ENCODE measurements at regions of chr18 and their contacts with region 1.

Region 1: GRCh38 chr18:3245853-3246634 is 1.6 kb upstream of the MYL12A start:
- DNase-seq: peak; percentile 65
- ATAC-seq: peak; percentile 62
- H3K4me3 Mint-ChIP-seq: peak overlapping the region; percentile 94
- H3K27ac Mint-ChIP-seq: peak overlapping the region; percentile 99
- H3K4me1 Mint-ChIP-seq: peaks cover 44% of the 10 kb centered on the region
- H3K27me3 Mint-ChIP-seq: no peaks in the 10 kb centered on the region
- CTCF ChIP-seq: peak; percentile 54

Region 2: GRCh38 chr18:2655178-2655953 is 590.7 kb before region 1 on chr18 and contains the start of gene SMCHD1:
- CTCF ChIA-PET with region 1: no interaction called
- POLR2A ChIA-PET with region 1: interaction called, 4 read pairs
- intact Hi-C with region 1: loop called (anchors 1 kb)
- DNase-seq: peak; percentile 90
- ATAC-seq: peak; percentile 74
- H3K4me3 Mint-ChIP-seq: peak within 1 kb of the TSS; percentile 96
- H3K27ac Mint-ChIP-seq: peak within 1 kb of the TSS; percentile 98
- H3K4me1 Mint-ChIP-seq: peaks cover 44% of the 10 kb centered on the region
- H3K27me3 Mint-ChIP-seq: no peaks in the 10 kb centered on the region
- CTCF ChIP-seq: no peak
- total RNA-seq, gene SMCHD1: 111 and 144 TPM in 2 replicates

Region 3: DNA sequence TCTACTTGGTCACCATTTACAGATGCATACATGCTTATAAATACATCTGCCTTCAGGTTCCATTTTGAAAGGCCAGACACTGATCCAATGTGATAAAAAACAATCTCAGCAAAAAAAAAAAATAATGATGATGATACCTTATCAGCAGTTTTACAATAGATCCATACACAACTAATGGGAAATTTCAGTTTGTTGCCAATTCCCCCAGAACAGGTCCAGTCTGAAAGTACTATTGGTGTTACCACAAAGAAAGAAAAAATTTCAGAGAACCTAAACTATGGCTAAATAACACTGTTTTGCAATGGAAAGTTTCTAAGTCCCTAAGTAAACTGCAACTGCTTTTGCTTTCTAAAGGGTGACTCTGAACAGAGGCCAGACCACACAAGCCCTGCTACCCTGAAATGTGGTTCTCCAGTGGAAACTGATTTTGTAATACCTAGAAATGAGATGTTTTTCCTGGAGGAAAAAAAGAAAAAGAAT is 287.2 kb before region 1 on chr18:
- CTCF ChIA-PET with region 1: interaction called, 10 read pairs
- POLR2A ChIA-PET with region 1: interaction called, 55 read pairs
- intact Hi-C with region 1: no loop called
- DNase-seq: no peak
- ATAC-seq: no peak
- H3K4me3 Mint-ChIP-seq: peak overlapping the region; percentile 32
- H3K27ac Mint-ChIP-seq: peak overlapping the region; percentile 97
- H3K4me1 Mint-ChIP-seq: peaks cover 82% of the 10 kb centered on the region
- H3K27me3 Mint-ChIP-seq: no peaks in the 10 kb centered on the region
- CTCF ChIP-seq: no peak

Region 4: DNA sequence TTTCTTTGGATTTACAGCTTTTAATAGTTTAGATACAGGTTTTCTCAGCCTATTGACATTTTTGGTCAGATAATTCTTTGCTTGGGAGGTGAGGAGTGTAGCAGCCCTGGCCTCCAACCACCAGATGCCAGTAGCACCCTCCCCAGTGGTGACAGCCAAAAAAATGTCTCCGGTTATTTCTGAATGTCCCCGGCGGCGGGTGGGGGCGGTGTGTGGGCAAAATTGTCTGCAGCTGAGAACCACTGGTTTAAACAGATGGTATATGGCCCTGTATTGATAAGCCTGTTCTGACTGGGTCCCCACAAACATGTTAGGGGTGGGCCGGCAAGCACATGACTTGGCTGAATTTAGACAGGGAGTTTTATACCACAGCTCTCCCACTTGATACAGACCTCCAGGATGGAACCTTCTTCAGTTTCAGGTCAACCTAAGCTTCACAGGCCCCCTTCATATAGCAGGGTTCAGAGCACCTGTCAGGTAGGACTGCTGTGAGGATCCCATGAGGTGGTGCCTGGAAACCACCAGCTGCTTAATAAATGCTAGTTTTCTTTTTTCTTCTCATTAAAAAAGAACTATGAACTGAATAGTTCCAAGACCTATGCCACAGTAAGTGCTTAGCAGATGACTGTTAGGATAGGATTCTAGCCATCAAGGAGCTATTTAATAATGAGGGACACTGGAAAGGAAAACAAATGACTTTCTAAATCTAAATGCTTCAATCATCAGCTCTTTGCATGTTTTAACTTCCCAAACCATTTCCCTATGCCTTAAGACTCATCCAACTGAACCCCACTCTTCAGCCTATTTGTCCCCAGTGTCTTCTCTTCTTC is 251.2 kb before region 1 on chr18:
- CTCF ChIA-PET with region 1: interaction called, 119 read pairs
- POLR2A ChIA-PET with region 1: interaction called, 43 read pairs
- intact Hi-C with region 1: loop called (anchors 1 kb)
- DNase-seq: peak; percentile 47
- ATAC-seq: peak; percentile 97
- H3K4me3 Mint-ChIP-seq: peak overlapping the region; percentile 48
- H3K27ac Mint-ChIP-seq: peak overlapping the region; percentile 50
- H3K4me1 Mint-ChIP-seq: peaks cover 34% of the 10 kb centered on the region
- H3K27me3 Mint-ChIP-seq: no peaks in the 10 kb centered on the region
- CTCF ChIP-seq: no peak

Region 5: DNA sequence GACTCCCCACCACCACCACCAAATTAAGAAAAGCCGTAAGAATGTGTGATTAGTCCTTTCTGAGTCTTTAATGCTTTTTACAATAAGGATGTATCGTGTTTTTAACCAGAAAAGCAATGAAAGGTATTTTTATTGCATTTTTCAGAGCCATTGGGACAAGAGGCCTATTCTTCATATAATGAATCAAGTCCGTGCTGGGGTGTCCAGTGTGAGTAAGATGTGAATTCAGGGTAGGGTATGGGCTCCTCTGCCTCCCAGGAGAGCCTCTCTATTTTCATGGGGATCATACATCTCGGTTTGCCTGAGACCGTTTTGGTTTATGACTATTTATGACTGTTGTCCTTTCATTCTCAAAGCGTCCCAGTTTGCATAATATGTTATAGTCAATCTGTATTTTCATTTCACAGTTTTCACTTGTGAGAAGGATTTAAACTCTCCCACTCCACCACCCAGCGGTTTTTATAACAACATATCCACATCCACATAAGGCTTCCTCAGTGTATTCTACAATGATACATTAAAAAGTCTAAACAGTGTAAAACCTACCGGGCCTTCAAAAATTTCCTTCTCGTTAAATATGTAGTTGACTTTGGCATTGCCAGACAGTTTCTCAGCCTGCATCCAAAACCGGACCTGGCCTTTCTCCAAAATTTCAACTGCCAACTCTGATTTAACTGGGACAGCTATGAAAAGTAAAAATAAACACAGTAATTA is 152.3 kb before region 1 on chr18:
- CTCF ChIA-PET with region 1: no interaction called
- POLR2A ChIA-PET with region 1: no interaction called
- intact Hi-C with region 1: no loop called
- DNase-seq: no peak
- ATAC-seq: no peak
- H3K4me3 Mint-ChIP-seq: no peak overlapping the region
- H3K27ac Mint-ChIP-seq: no peak overlapping the region
- H3K4me1 Mint-ChIP-seq: no peaks in the 10 kb centered on the region
- H3K27me3 Mint-ChIP-seq: no peaks in the 10 kb centered on the region
- CTCF ChIP-seq: no peak

Region 6: DNA sequence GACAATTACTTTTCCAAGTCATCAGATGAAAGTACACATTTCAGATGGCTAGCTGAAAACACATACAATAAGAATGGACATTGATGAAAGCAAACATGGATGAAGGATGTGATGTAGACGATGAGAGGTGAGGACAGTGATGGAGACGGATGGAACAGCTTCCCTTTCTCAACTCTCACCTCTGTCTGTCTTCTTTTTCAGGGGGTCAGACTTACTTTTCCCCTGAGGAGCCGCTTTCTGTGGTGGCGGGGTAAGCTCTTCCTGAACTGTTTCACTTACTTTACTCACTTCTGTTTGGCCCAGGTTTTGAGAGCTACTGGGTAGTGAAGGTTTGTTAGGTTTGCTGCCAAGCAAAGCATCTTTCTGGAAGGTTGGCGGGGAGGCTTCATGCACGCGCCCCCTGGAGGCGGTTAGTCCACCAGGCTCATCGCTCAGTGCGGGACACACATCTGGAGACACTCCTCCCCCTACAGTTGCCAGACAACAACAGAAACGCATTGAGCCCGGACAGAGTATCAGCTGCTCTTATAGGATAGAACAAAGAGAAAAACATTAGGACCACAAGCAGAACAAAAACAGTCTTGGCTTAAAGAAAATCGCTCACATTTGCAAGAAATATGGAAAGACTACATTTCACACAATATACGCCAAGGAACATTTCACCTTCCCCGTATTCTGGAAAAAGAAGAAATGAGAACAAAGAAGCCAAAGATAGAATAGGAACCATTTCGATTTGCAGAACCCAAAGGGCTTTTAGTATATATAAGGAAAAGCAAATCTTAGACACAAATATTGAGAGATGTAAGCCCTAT is 116.8 kb before region 1 on chr18:
- CTCF ChIA-PET with region 1: interaction called, 15 read pairs
- POLR2A ChIA-PET with region 1: interaction called, 3 read pairs
- intact Hi-C with region 1: loop called (anchors 1 kb)
- DNase-seq: peak; percentile 59
- ATAC-seq: peak; percentile 99
- H3K4me3 Mint-ChIP-seq: no peak overlapping the region
- H3K27ac Mint-ChIP-seq: no peak overlapping the region
- H3K4me1 Mint-ChIP-seq: peaks cover 6% of the 10 kb centered on the region
- H3K27me3 Mint-ChIP-seq: no peaks in the 10 kb centered on the region
- CTCF ChIP-seq: peak; percentile 16

Region 7: DNA sequence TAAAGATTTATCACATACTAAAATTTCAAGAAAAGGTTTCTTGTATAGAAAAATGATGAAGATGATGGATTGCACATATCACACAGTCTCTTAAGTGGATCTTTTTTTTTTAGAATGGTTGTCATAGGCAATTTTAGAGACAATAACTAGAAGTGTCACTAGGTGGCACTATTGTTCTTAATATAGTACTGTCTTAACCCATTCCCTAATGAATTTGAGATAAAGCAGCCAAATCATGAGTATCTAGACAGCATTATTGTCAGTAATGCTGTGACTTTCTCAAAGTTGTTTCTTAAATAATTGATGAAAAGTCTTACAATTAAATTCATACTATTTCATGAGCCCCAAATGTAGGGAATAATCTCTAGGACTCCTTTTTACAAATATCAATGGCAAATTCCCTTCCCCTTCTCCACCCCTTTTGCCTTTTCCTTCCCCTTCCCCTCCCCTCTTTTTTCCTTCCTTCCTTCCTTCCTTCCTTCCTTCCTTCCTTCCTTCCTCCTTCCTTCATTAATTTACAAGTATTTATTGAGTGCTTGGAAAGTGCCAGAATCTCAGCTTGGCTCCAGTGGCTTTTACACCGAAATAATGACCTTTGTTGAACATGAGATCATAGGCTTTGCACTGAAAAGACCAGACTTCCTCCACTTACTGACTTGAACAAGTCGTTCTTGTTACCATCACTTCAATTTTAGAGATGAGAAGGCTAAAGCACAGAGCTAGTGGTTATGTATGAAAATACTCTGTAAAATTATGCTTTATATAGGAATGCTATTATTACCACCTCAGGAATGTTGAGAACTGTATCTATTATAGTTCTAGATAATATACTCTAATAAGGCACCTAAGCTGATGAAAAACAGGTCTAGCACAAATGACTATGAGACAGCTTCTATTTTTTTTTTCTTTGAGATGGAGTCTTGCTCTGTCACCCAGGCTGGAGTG is 35.7 kb after region 1 on chr18:
- CTCF ChIA-PET with region 1: interaction called, 6 read pairs
- POLR2A ChIA-PET with region 1: interaction called, 52 read pairs
- intact Hi-C with region 1: loop called (anchors 1 kb)
- DNase-seq: no peak
- ATAC-seq: peak; percentile 39
- H3K4me3 Mint-ChIP-seq: no peak overlapping the region
- H3K27ac Mint-ChIP-seq: no peak overlapping the region
- H3K4me1 Mint-ChIP-seq: peaks cover 41% of the 10 kb centered on the region
- H3K27me3 Mint-ChIP-seq: no peaks in the 10 kb centered on the region
- CTCF ChIP-seq: peak; percentile 49

Region 8: DNA sequence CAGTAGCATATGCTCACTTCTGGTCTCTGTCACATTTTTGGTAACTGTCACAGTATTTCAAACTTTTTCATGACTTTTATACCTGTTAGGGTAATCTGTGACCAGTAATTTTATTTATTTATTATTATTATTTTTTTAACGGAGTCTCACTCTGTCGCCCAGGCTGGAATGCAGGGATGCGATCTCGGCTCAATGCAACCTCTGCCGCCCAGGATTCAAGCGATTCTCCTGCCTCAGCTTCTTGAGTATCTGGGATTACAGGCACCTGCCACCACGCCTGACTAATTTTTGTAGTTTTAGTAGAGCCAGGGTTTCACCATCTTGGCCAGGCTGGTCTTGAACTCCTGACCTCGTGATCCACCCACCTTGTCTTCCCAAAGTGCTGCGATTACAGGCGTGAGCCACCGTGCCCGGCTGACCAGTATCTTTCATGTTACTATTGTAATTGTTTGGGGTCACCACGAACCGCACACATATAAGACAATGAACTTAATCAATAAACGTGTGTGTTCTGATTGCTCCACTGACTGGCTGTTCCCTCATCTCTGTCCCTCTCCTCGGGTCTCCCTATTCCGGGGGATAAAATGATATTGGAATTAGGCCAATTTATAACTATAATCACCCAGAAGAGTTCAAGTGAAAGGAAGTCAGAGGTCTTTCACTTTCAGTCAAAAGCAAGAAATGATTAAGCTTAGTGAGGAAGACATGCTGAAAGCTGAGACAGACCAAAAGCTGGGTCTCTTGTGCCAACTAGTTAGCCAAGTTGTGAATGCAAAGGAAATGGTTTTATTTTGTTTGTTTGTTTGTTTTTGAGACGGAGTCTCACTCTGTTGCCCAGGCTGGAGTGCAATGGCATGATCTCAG is 226.9 kb after region 1 on chr18:
- CTCF ChIA-PET with region 1: no interaction called
- POLR2A ChIA-PET with region 1: no interaction called
- intact Hi-C with region 1: no loop called
- DNase-seq: no peak
- ATAC-seq: peak; percentile 50
- H3K4me3 Mint-ChIP-seq: no peak overlapping the region
- H3K27ac Mint-ChIP-seq: peak overlapping the region; percentile 37
- H3K4me1 Mint-ChIP-seq: peaks cover 6% of the 10 kb centered on the region
- H3K27me3 Mint-ChIP-seq: no peaks in the 10 kb centered on the region
- CTCF ChIP-seq: no peak

Region 9: GRCh38 chr18:3593904-3594661 is 348.0 kb after region 1 on chr18:
- CTCF ChIA-PET with region 1: interaction called, 6 read pairs
- POLR2A ChIA-PET with region 1: interaction called, 23 read pairs
- intact Hi-C with region 1: loop called (anchors 1 kb)
- DNase-seq: peak; percentile 76
- ATAC-seq: peak; percentile 78
- H3K4me3 Mint-ChIP-seq: peak overlapping the region; percentile 90
- H3K27ac Mint-ChIP-seq: peak overlapping the region; percentile 94
- H3K4me1 Mint-ChIP-seq: peaks cover 65% of the 10 kb centered on the region
- H3K27me3 Mint-ChIP-seq: no peaks in the 10 kb centered on the region
- CTCF ChIP-seq: no peak

Region 10: DNA sequence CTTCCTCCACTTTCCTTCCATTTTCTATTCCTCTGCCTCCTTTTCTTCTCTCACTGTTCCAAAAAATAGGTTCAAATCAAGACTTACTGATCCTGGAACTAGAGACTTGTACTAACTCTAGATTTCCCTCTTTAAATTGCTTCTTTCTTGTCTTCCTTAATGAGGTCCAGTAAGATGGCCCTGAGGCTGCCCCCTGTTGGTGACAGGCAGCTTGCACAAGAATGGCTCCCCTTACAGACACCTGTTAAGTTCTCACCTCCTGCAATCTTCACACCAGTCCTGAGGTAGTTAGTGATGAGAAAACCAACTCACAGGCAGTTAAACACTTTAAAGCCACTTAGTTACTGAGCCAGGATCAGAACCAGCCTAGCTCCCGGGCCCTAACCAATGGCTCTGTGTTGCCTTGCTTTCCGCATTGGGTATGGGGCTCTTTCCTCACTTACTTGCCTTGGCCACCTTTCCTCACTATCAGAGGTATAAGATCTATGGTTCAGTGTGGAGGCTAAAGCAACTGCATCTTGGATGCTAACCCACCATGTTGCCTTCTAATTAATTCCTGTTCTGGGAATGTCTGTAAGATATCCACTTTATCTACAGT is 1820.4 kb after region 1 on chr18:
- CTCF ChIA-PET with region 1: no interaction called
- POLR2A ChIA-PET with region 1: no interaction called
- intact Hi-C with region 1: no loop called
- DNase-seq: no peak
- ATAC-seq: no peak
- H3K4me3 Mint-ChIP-seq: no peak overlapping the region
- H3K27ac Mint-ChIP-seq: no peak overlapping the region
- H3K4me1 Mint-ChIP-seq: no peaks in the 10 kb centered on the region
- H3K27me3 Mint-ChIP-seq: peaks cover 6% of the 10 kb centered on the region
- CTCF ChIP-seq: no peak

Measured in activated B cell treated with CpG ODN at 0.5 μM for 24 hours (primary cell).